ENCODE measurements at regions of chr1 and their contacts with region 1.

Region 1: DNA sequence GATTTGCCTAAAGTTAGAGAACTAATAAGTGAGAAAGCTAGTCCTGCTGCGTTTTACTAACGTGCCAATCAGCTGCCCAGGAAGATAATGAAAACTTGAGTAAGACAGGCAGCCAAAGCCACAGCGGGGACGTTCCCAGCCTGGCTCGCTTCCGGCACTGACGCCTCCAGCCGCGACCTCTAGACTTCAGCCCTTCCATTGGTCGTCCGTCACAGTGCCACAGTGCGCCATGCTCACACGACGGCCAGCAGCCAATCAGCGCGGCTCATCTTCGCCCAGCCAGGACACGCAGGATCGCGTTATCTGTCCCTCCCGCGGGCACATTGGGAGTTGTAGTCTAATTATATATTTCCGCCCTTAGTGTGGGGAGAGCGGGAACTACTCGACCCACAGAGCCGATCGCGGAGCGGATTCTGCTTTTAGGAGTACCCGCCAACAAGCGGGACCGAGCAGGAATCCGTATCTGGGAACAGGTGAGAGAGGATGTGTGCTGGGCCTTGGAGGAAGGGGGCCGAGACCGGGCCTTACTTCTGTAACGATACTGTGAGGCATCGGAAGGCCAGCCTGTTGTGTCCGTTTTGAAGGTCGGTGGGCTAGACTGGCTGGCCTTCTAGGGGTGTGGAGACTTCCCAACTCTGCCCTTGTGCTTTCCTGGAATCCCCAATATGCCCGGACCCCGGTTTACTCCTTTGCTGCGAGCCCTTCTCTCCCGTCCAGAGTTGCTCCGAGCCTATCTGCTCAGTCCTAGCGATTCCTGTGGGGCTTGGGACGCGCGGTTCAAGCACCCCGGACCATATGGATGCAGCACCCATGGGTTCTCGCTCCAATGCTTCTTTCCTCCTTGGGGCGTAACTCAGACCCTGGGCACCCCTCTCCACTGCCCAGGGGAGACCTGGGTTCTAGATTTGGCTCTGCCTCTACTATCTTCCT is at the start of gene FDPS:
- DNase-seq: peak; percentile 97
- H3K4me3 ChIP-seq: peak within 1 kb of the TSS; percentile 88
- H3K27ac ChIP-seq: peak within 1 kb of the TSS; percentile 91
- H3K4me1 ChIP-seq: peaks cover 26% of the 10 kb centered on the region
- H3K27me3 ChIP-seq: no peaks in the 10 kb centered on the region
- CTCF ChIP-seq: no peak
- total RNA-seq, gene FDPS: 397 and 568 TPM in 2 replicates

Region 2: DNA sequence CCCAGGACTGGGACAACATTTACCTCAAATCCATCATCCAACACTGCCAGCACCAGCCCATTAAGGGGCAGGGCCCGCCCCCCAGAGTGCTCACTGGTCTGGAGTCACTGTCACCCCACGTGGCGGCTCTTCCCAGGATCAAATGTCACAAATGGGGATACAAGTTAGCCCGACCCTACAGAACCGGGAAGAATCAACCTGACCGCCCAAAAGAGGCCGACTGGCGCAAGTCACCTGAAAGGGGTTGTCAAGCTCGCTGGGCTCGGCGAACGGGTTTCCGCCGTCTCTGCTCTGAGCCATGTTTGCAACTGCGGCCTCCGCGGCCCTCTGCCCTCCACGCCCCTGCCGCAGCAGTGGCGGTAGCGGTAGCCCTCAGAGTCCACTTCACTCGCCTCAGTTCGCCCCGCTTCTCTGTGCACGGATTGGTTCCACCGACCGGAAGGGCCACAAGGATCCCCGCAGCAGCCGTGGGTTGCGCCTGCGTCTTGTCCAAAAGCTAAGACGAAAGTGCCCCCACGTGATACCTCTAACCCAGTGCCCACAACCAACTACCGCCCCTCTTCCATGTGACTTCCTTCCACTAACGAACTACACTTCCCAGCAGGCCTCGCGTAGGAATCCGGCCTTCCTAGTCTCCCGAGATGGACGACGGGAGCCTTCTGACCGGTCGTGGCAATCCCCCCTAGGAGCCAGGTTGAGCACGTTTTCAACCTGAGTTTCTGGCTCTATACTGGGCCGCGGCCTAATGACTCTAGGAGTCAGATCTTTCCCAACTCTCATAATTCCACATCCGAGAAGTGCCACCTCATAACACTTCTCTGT is 46.7 kb before region 1 on chr1 and contains the start of gene SCAMP3:
- CTCF ChIA-PET with region 1: no interaction called
- POLR2A ChIA-PET with region 1: no interaction called
- intact Hi-C with region 1: loop called (anchors 5 kb)
- DNase-seq: peak; percentile 91 to 96
- H3K4me3 ChIP-seq: peak within 1 kb of the TSS; percentile 89
- H3K27ac ChIP-seq: peak within 1 kb of the TSS; percentile 54
- H3K4me1 ChIP-seq: peaks cover 18% of the 10 kb centered on the region
- H3K27me3 ChIP-seq: no peaks in the 10 kb centered on the region
- CTCF ChIP-seq: no peak
- total RNA-seq, gene SCAMP3: 56.9 and 64.1 TPM in 2 replicates

Region 3: GRCh38 chr1:155277070-155277895 is 31.5 kb before region 1 on chr1 and contains the start of gene HCN3:
- CTCF ChIA-PET with region 1: no interaction called
- POLR2A ChIA-PET with region 1: interaction called, 13 read pairs
- intact Hi-C with region 1: loop called (anchors 2 kb)
- DNase-seq: peak; percentile 85 to 97
- H3K4me3 ChIP-seq: peak within 1 kb of the TSS; percentile 96
- H3K27ac ChIP-seq: no peak within 1 kb of the TSS
- H3K4me1 ChIP-seq: peaks cover 13% of the 10 kb centered on the region
- H3K27me3 ChIP-seq: no peaks in the 10 kb centered on the region
- CTCF ChIP-seq: peak; percentile 68; the same call in 1 of the 2 replicates
- total RNA-seq, gene HCN3: 6.6 and 7.5 TPM in 2 replicates

Region 4: DNA sequence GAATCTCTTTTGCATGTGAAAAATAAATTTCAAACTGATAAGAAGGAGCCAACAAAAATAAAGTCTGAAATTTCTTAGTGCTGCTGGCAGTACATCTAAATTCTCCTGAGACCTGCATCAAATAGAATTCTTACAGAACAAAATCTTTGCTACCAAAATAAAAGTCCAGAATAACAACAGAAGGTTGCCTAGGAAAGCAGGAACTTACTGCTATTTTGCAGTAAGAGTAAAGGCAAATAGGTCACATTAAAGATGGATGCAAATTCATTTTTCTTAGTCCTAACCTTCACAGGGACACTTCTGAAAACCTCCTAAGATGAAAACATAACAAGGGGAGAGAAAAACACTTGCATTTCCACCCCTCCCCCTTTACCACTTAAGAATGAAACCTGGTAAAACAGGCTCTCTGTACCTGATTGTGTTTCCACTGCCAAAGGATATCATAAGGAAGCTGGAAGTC is 70.9 kb after region 1 on chr1:
- CTCF ChIA-PET with region 1: no interaction called
- POLR2A ChIA-PET with region 1: no interaction called
- intact Hi-C with region 1: no loop called
- DNase-seq: no peak
- H3K4me3 ChIP-seq: no peak overlapping the region
- H3K27ac ChIP-seq: no peak overlapping the region
- H3K4me1 ChIP-seq: no peaks in the 10 kb centered on the region
- H3K27me3 ChIP-seq: no peaks in the 10 kb centered on the region
- CTCF ChIP-seq: no peak

Region 5: DNA sequence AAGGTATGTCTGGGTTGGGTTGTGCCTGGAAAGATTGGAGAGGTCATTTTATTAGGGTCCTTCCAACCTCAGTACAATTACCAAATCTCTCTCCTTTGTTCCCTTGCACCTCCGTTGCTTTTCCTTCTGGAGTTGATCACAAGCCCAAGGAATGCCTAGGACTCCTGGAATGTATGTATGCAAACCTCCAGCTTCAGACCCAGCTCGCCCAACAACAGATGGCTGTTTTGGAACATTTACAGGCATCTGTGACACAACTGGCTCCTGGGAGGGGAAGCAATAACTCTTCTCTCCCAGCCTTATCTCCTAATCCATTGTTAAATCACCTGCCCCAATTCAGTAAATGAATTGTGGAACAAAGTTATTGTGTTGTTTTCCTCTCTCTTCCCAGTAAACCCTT is 1037.9 kb after region 1 on chr1:
- CTCF ChIA-PET with region 1: no interaction called
- POLR2A ChIA-PET with region 1: interaction called, 22 read pairs
- intact Hi-C with region 1: no loop called
- DNase-seq: no peak
- H3K4me3 ChIP-seq: no peak overlapping the region
- H3K27ac ChIP-seq: no peak overlapping the region
- H3K4me1 ChIP-seq: no peaks in the 10 kb centered on the region
- H3K27me3 ChIP-seq: no peaks in the 10 kb centered on the region
- CTCF ChIP-seq: no peak

Measured in PC-9 (cell line).